ENCODE measurements at regions of chr9 and their contacts with region 1.

Region 1: GRCh38 chr9:70043689-70044489 is at the start of gene MAMDC2:
- DNase-seq: peak; percentile 74
- ATAC-seq: peak; percentile 83
- total RNA-seq, gene MAMDC2: 10.0 TPM

Region 2: GRCh38 chr9:69996967-69997366 is 46.9 kb before region 1 on chr9:
- intact Hi-C with region 1: loop called (anchors 10 kb)
- DNase-seq: no peak
- ATAC-seq: peak; percentile 90

Region 3: DNA sequence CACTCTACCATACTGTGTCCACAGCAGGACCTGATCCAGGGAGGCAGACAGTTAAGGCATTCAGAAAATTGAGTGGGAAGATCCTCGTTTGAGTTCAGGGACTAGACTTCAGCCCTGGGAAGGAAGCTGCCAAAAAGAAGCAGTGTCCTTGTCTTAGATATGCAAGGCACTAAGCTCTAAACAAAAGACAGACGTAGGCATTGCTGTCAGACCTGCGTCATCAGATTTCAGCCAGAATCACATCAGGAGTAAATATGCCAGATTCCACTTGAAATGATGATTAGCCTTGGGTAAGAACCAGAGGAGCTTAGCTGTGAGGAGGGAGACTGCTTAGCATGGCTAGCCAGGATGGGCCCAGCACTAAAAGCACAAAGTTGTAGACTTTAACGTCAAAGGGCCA is 56.5 kb after region 1 on chr9:
- intact Hi-C with region 1: loop called (anchors 10 kb)
- DNase-seq: no peak
- ATAC-seq: peak; percentile 36

Measured in Right ventricle myocardium superior (tissue), 1 donor.